ENCODE measurements at regions of chr9 and their contacts with region 1.

Region 1: DNA sequence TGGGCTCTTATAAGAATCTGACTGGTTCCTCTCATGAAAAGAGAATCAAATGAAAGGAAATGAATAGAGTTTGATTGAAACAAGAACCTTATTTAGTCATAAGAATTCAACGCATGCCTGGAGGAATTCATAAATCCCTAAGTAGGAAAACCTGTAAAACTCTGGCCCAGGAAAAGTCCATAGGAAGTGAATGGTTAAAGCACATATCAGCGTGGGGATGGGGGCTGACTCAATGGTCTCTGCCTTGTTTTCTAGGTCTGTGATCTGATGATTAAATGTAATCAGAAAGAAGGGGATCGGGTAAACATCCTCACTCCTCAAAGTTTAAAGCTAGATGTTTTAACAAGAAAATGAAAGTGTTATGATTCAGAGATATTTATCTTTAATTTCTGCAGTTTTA is 759.4 kb upstream of the C9orf72 start:
- DNase-seq: no peak
- ATAC-seq: no peak
- H3K4me3 ChIP-seq: no peak overlapping the region
- H3K4me3 Mint-ChIP-seq: no peak overlapping the region
- H3K27ac ChIP-seq: no peak overlapping the region
- H3K27ac Mint-ChIP-seq: no peak overlapping the region
- H3K4me1 ChIP-seq: no peaks in the 10 kb centered on the region
- H3K4me1 Mint-ChIP-seq: no peaks in the 10 kb centered on the region
- H3K27me3 ChIP-seq: no peaks in the 10 kb centered on the region
- H3K27me3 Mint-ChIP-seq: no peaks in the 10 kb centered on the region
- CTCF ChIP-seq: no peak

Region 2: DNA sequence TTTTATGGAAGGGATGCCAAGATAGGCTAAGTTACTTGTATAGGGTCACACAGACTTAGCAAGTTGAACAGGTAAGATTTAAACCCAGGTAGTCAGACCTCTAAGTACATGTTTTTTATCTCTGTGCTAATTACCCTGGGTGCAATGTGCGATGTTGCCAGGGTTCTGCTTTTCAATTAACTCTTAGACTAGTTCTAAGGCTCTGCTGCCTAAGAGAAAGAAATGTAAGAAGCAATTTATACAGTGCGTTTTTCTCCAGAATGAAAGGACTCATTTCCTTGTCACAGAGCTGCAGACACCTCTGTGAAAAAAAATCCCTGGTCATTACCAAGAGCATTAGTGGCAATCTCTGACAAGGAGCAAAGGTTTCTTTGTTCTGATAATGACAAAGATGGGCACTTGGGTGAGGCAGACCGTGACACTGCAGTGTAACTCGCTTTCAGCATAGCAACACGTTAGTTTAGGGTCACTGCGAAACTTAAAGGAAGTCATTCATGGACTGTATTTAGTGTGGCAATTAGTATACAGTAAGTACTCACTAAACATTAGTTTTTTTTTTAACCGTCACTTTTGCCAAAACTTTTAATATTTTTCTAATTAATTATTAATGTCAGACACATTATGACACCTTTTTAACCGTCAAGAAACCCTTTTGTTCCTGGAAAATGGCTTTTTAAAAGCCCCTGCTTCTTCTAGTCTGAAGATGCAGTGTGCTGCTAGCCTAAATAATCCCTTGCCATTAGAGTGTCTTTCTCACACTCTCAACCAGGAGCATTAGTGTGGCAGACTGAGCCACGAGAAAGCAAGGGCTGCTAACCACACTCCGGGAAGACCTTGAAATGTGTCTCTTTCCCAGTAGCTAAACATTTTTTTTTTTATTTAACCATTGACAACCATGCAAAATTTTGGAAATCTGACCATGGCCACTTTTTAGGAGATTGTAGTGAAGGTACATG is 239.4 kb before region 1 on chr9:
- CTCF ChIA-PET with region 1: no interaction called
- POLR2A ChIA-PET with region 1: no interaction called
- intact Hi-C with region 1: no loop called
- DNase-seq: no peak
- ATAC-seq: no peak
- H3K4me3 ChIP-seq: no peak overlapping the region
- H3K4me3 Mint-ChIP-seq: no peak overlapping the region
- H3K27ac ChIP-seq: no peak overlapping the region
- H3K27ac Mint-ChIP-seq: no peak overlapping the region
- H3K4me1 ChIP-seq: no peaks in the 10 kb centered on the region
- H3K4me1 Mint-ChIP-seq: no peaks in the 10 kb centered on the region
- H3K27me3 ChIP-seq: no peaks in the 10 kb centered on the region
- H3K27me3 Mint-ChIP-seq: no peaks in the 10 kb centered on the region
- CTCF ChIP-seq: no peak

Region 3: DNA sequence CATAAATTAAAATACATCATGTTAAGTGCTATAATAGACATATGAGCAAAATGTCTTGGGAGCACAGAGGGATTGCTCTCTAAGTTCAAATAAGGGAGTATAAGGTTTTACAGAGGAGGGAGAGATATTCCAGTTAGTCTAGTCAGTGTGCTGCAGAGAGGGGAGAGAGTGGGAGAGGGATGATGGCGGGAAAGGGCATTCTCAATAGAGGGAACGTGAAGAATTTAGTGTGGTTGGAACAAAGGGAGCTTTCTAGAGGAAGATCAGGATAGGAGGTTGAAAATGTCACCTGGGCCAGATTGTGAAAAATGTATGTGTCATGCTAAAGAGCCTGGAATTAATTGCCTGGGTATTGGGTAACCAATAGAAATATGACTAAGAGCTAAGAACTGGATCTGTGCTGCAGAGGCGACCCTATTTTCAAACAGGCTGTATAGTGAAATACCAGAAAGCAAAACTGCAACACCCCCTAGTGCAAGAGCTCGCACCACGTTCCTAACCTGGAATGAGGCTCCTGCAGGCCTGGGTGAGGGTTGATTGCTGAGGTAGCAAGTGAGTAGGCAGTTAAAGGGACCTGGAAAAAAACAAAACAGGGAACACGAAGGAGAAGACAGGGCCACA is 32.5 kb after region 1 on chr9:
- CTCF ChIA-PET with region 1: no interaction called
- POLR2A ChIA-PET with region 1: no interaction called
- intact Hi-C with region 1: loop called in 1 of 2 experiments (anchors 1 kb)
- DNase-seq: no peak
- ATAC-seq: no peak
- H3K4me3 ChIP-seq: no peak overlapping the region
- H3K4me3 Mint-ChIP-seq: no peak overlapping the region
- H3K27ac ChIP-seq: no peak overlapping the region
- H3K27ac Mint-ChIP-seq: no peak overlapping the region
- H3K4me1 ChIP-seq: no peaks in the 10 kb centered on the region
- H3K4me1 Mint-ChIP-seq: no peaks in the 10 kb centered on the region
- H3K27me3 ChIP-seq: no peaks in the 10 kb centered on the region
- H3K27me3 Mint-ChIP-seq: no peaks in the 10 kb centered on the region
- CTCF ChIP-seq: no peak

Region 4: GRCh38 chr9:28378231-28378630 is 45.6 kb after region 1 on chr9:
- CTCF ChIA-PET with region 1: no interaction called
- POLR2A ChIA-PET with region 1: no interaction called
- intact Hi-C with region 1: no loop called
- DNase-seq: no peak
- ATAC-seq: no peak
- H3K4me3 ChIP-seq: no peak overlapping the region
- H3K4me3 Mint-ChIP-seq: no peak overlapping the region
- H3K27ac ChIP-seq: no peak overlapping the region
- H3K27ac Mint-ChIP-seq: no peak overlapping the region
- H3K4me1 ChIP-seq: no peaks in the 10 kb centered on the region
- H3K4me1 Mint-ChIP-seq: no peaks in the 10 kb centered on the region
- H3K27me3 ChIP-seq: no peaks in the 10 kb centered on the region
- H3K27me3 Mint-ChIP-seq: no peaks in the 10 kb centered on the region
- CTCF ChIP-seq: no peak

Measured in CD4-positive, alpha-beta T cell (primary cell).